BJ (cell line): ENCODE measurements at regions of chr4 and their contacts with region 1.

Region 1: GRCh38 chr4:57163530-57164459 is 53.6 kb upstream of the IGFBP7 start:
- DNase-seq: no peak
- H3K4me3 ChIP-seq: peak overlapping the region; percentile 51
- H3K27me3 ChIP-seq: peaks cover 8% of the 10 kb centered on the region
- CTCF ChIP-seq: peak; percentile 97

Region 2: DNA sequence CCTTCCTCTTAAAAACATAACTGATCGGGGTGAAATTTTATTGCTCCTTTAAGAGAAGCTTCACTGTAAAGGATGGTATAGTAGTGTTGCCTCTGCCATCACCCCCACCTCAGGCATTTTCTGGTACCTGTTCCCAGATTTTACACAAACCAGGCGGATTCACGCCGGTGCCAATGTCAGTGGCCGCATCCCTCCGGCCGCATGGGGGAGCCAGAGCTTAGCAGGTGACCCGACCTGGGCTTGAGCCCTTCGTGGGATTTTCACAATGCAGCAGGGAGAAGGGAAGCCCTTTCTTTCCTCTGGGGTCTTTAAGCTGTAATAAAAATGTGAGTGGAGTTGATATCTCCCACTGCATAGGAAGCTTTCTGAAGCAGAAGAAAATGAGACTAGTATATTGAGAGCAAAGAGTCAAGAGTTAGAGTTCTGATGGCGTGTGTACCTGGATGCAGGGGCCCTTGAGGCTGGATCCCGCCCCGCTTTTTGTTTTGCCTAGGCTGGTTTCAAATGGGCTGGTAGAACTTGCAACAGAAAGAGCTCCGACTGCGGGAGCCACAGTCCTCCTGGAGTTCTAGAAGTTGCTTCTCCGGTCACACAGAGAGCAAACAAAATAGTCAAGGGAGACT is 125.7 kb before region 1 on chr4:
- CTCF ChIA-PET with region 1: interaction called, 55 read pairs
- POLR2A ChIA-PET with region 1: interaction called, 6 read pairs
- DNase-seq: no peak
- H3K4me3 ChIP-seq: no peak overlapping the region
- H3K27me3 ChIP-seq: no peaks in the 10 kb centered on the region
- CTCF ChIP-seq: peak; percentile 86

Region 3: DNA sequence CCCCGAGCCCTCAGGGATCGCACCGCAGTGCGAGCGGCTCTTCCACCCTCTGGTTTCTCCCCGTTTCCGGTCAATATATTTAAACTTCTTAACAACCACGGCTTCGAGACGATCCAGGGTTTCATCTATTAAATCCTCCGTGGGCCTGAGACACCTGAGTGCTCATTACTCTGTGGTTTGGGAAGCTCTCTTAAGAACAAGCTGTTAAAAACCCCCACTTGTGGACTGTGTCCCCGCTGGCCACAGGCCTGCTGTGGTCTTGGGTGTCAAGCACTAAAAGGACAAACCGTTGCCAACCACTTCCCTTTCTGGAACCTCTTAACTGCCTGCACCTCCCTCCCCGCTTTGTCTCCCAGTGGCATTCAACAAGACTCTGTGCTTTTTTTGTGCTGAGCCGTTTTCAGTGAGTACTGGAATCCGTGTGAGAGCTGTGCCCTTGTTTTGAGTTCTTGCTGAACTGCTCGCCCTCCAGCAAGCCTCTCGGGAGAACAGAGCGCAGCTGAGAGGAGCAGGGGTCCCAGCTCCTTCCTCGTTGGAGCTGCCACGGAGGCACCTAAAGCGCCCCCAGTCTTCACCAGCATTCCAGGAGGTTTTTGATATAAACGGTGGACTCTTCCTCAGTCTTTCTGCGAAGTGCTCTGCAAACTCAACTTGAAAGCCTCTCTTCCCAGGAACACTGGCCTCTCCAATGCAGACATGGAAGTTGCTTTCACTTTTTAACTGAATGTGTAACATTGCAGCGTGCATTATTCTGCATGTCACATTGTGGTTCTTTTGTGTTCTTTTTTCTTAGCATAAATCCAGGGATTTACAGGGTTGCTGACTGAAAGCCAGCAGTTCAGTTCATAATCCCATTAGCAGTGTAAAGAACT is 52.9 kb before region 1 on chr4:
- CTCF ChIA-PET with region 1: interaction called, 11 read pairs
- POLR2A ChIA-PET with region 1: no interaction called
- DNase-seq: peak; percentile 26
- H3K4me3 ChIP-seq: peak overlapping the region; percentile 55
- H3K27me3 ChIP-seq: no peaks in the 10 kb centered on the region
- CTCF ChIP-seq: no peak

Region 4: DNA sequence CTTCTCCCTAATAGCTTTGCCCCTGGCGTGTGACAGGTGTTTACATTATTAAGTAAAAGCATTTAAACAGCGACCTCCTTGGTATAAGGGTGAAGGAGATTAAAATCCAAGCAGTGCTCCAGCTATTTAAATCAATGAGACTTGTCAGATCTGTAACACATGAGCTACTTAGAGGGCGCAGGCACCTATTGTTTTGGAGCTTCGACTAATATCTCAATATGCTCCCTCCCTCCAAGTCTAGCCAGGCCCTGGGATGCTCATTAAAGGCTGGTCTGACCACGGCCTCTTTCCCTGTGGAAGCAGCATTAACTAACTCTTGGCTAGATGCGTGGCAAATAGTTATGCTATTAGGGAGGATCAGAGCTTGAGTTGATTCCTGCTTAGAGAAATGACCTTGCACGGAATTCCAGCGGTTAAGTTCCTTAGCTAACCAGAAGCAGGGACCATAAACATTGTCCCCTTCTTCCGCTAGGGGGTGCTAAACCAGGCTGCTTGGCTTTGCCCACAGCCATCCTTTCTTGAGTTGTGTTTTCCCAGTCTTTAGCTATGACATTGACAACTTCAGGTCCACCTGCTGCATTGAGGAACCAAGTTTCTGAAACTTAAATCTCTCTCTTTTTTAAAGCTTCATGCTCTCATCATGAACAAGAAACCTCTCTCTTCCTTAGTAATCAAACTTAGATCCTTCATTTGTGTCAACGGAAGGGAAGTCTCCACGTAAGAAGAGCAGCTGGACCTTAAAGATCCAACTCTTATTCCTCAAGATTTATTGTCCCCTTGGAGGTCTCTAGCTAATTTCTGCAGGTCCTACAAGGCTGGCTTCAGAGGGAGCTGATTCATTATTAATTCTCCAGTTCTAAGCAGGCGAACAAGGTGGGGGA is 27.0 kb after region 1 on chr4:
- CTCF ChIA-PET with region 1: interaction called, 10 read pairs
- POLR2A ChIA-PET with region 1: no interaction called
- DNase-seq: no peak
- H3K4me3 ChIP-seq: no peak overlapping the region
- H3K27me3 ChIP-seq: peaks cover 5% of the 10 kb centered on the region; the same call in 1 of the 2 replicates
- CTCF ChIP-seq: peak; percentile 63

Region 5: GRCh38 chr4:57344296-57344695 is 180.5 kb after region 1 on chr4:
- CTCF ChIA-PET with region 1: interaction called, 10 read pairs
- POLR2A ChIA-PET with region 1: no interaction called
- DNase-seq: no peak
- H3K4me3 ChIP-seq: no peak overlapping the region
- H3K27me3 ChIP-seq: 0 out of 2 replicates have a peak, but pooled peaks cover 2% of the 10 kb centered on the region
- CTCF ChIP-seq: no peak

Region 6: DNA sequence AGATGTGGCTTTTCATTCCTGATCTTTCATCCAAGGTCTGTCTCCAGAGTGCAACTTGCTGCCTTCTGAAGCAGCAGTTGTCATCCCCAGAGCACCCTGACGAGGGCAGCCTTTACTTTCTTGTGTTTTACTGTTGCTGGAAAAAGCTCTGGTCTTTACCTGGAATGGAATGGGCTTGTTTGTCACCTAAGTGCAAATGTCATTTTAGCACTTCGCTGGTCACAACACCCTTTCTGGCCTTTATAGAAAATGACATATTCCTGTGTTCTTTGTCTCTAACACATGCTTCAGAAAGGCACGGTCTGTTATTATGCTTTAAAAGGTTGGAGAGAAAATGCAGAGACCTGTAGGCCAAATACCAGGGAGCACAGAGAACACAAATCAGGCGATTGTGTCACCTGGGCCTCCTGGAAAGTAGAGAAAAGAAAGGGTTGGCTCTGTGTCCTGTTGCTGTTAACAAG is 279.1 kb after region 1 on chr4:
- CTCF ChIA-PET with region 1: interaction called, 14 read pairs
- POLR2A ChIA-PET with region 1: no interaction called
- DNase-seq: no peak
- H3K4me3 ChIP-seq: no peak overlapping the region
- H3K27me3 ChIP-seq: peaks cover 2% of the 10 kb centered on the region; the same call in 1 of the 2 replicates
- CTCF ChIP-seq: peak; percentile 73